B cell (primary cell): ENCODE measurements at regions of chr14 and their contacts with region 1.

Region 1: GRCh38 chr14:72516936-72517700 is 376.8 kb downstream of the DPF3 start:
- DNase-seq: peak; percentile 87
- ATAC-seq: peak; percentile 64
- H3K4me3 ChIP-seq: no peak overlapping the region
- H3K4me3 Mint-ChIP-seq: peak overlapping the region; percentile 56
- H3K27ac ChIP-seq: peak overlapping the region; percentile 74 to 84
- H3K27ac Mint-ChIP-seq: peak overlapping the region; percentile 92
- H3K4me1 ChIP-seq: peaks cover 58 to 65% of the 10 kb centered on the region in 2 donors
- H3K4me1 Mint-ChIP-seq: peaks cover 57% of the 10 kb centered on the region
- H3K27me3 ChIP-seq: peaks cover 0 to under 1% (median 0%) of the 10 kb centered on the region in 4 experiments
- H3K27me3 Mint-ChIP-seq: no peaks in the 10 kb centered on the region
- CTCF ChIP-seq: peak; percentile 92

Region 2: DNA sequence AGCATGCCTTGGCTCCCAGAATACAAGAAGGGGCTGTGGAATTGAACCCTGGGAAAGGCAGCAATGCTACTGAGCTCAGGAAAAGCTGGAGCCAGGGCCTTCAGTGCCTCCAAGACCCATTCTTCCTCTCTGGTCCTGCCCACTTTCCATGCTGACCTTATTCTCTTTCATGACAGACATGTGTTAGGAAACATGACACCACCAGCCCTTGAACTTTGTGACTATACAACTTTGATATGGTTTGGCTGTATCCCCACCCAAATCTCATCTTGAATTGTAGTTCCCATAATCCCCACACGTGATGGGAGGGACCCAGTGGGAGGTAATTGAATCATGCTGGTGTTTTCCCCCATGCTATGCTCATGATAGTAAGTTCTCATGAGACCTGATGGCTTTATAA is 31.4 kb before region 1 on chr14:
- CTCF ChIA-PET with region 1: no interaction called
- POLR2A ChIA-PET with region 1: no interaction called
- intact Hi-C with region 1: no loop called
- DNase-seq: no peak
- ATAC-seq: no peak
- H3K4me3 ChIP-seq: no peak overlapping the region
- H3K4me3 Mint-ChIP-seq: no peak overlapping the region
- H3K27ac ChIP-seq: no peak overlapping the region
- H3K27ac Mint-ChIP-seq: no peak overlapping the region
- H3K4me1 ChIP-seq: peaks cover 8 to 9% of the 10 kb centered on the region in 2 donors
- H3K4me1 Mint-ChIP-seq: peaks cover 12% of the 10 kb centered on the region
- H3K27me3 ChIP-seq: peaks cover 0 to 6% (median 0%) of the 10 kb centered on the region in 4 experiments
- H3K27me3 Mint-ChIP-seq: peaks cover 14% of the 10 kb centered on the region
- CTCF ChIP-seq: no peak

Region 3: GRCh38 chr14:72528059-72528862 is 11.1 kb after region 1 on chr14:
- CTCF ChIA-PET with region 1: interaction called, 22 read pairs
- POLR2A ChIA-PET with region 1: no interaction called
- intact Hi-C with region 1: no loop called
- DNase-seq: no peak
- ATAC-seq: no peak
- H3K4me3 ChIP-seq: no peak overlapping the region
- H3K4me3 Mint-ChIP-seq: no peak overlapping the region
- H3K27ac ChIP-seq: no peak overlapping the region
- H3K27ac Mint-ChIP-seq: peak overlapping the region; percentile 16
- H3K4me1 ChIP-seq: peaks cover 45 to 67% of the 10 kb centered on the region in 2 donors
- H3K4me1 Mint-ChIP-seq: peaks cover 75% of the 10 kb centered on the region
- H3K27me3 ChIP-seq: no peaks in the 10 kb centered on the region
- H3K27me3 Mint-ChIP-seq: no peaks in the 10 kb centered on the region
- CTCF ChIP-seq: no peak

Region 4: DNA sequence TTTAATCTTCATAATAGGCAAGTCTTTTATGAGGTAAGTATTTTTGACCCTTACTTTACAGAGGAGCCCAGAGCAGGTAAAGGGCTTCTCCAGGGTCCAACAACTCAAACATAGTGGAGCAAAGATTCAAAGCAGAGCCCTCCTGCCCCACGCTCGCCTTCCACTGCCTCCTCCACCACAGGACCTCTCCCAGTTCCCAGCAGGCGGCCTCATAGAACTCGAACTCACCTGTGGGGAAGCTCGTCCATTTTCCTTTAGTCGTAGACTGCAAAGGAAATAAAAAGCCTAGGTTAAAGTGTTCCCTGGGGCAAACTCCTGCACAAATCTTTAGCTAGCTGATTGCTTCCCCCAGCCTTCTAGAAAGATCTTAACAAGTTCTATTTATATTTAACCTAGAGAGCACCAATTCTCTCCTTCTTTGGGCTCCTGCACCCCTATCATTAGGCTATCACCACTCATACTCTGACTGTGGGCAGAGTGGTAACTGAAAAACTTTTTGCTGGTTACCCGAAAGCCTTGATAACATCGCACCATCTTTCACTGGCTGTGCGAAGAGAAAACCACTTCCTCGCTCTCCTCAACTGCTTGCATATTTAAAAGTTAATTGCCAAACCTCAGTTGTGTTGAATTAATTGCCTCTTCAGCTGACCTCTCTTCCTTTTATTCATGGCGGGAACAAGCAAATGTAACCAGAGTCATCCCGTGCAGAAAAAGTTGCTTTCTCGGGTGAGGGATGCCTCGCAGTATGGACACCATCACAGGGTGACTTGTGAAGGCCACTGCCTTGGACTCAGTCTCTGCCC is 77.2 kb after region 1 on chr14:
- CTCF ChIA-PET with region 1: interaction called, 6 read pairs
- POLR2A ChIA-PET with region 1: no interaction called
- intact Hi-C with region 1: loop called (anchors 5 kb)
- DNase-seq: no peak
- ATAC-seq: no peak
- H3K4me3 ChIP-seq: no peak overlapping the region
- H3K4me3 Mint-ChIP-seq: peak overlapping the region; percentile 23
- H3K27ac ChIP-seq: no peak overlapping the region
- H3K27ac Mint-ChIP-seq: no peak overlapping the region
- H3K4me1 ChIP-seq: peaks cover 50 to 55% of the 10 kb centered on the region in 2 donors
- H3K4me1 Mint-ChIP-seq: peaks cover 70% of the 10 kb centered on the region
- H3K27me3 ChIP-seq: no peaks in the 10 kb centered on the region
- H3K27me3 Mint-ChIP-seq: no peaks in the 10 kb centered on the region
- CTCF ChIP-seq: no peak

Region 5: GRCh38 chr14:72888192-72888591 is 371.1 kb after region 1 on chr14:
- CTCF ChIA-PET with region 1: interaction called, 27 read pairs
- POLR2A ChIA-PET with region 1: interaction called, 5 read pairs
- intact Hi-C with region 1: no loop called
- DNase-seq: no peak
- ATAC-seq: no peak
- H3K4me3 ChIP-seq: no peak overlapping the region
- H3K4me3 Mint-ChIP-seq: no peak overlapping the region
- H3K27ac ChIP-seq: no peak overlapping the region
- H3K27ac Mint-ChIP-seq: peak overlapping the region; percentile 1
- H3K4me1 ChIP-seq: peaks cover 12 to 25% of the 10 kb centered on the region in 2 donors
- H3K4me1 Mint-ChIP-seq: peaks cover 37% of the 10 kb centered on the region
- H3K27me3 ChIP-seq: peaks cover 0 to 3% (median 0%) of the 10 kb centered on the region in 4 experiments
- H3K27me3 Mint-ChIP-seq: no peaks in the 10 kb centered on the region
- CTCF ChIP-seq: no peak

Region 6: DNA sequence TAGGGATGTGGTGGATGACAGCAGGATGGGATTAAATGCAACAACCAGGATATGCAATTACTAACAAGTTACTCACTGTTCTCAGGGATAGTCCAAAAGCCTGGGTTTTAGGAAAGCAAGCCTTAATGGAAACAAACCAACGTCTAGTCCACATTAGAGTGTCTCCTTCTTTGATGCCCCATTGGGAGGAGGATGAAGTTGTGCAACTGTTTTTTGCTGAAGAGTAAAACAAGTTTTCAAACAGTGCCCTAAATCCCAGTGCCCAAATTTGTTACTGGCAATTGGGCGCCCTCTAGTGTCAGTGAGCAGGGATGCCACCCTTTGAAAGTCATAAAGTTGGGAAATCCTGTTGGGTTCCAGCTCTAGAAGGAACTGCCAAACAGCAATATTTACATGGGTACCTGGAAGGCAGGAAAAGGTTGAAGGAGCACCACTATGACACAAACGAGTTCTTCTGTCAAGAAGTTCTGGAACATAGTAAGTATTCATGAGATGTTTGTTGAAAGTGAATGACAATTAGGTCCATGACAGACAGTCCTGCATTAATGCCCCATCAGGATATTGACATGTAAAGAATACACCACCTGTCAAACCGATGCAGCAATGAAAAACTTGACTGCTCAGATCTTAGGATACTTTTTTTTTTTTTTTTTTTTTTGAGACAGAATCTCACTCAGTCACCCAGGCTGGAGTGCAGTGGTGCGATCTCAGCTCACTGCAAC is 387.9 kb after region 1 on chr14:
- CTCF ChIA-PET with region 1: interaction called, 364 read pairs
- POLR2A ChIA-PET with region 1: interaction called, 3 read pairs
- intact Hi-C with region 1: loop called (anchors 1 kb)
- DNase-seq: peak; percentile 83
- ATAC-seq: peak; percentile 66
- H3K4me3 ChIP-seq: no peak overlapping the region
- H3K4me3 Mint-ChIP-seq: no peak overlapping the region
- H3K27ac ChIP-seq: no peak overlapping the region
- H3K27ac Mint-ChIP-seq: peak overlapping the region; percentile 4
- H3K4me1 ChIP-seq: peaks cover 7 to 22% of the 10 kb centered on the region in 2 donors
- H3K4me1 Mint-ChIP-seq: peaks cover 13% of the 10 kb centered on the region
- H3K27me3 ChIP-seq: no peaks in the 10 kb centered on the region
- H3K27me3 Mint-ChIP-seq: no peaks in the 10 kb centered on the region
- CTCF ChIP-seq: peak; percentile 97

Region 7: GRCh38 chr14:72948481-72949138 is 431.5 kb after region 1 on chr14:
- CTCF ChIA-PET with region 1: interaction called, 165 read pairs
- POLR2A ChIA-PET with region 1: no interaction called
- intact Hi-C with region 1: loop called (anchors 1 kb)
- DNase-seq: peak; percentile 71
- ATAC-seq: peak; percentile 43
- H3K4me3 ChIP-seq: no peak overlapping the region
- H3K4me3 Mint-ChIP-seq: no peak overlapping the region
- H3K27ac ChIP-seq: no peak overlapping the region
- H3K27ac Mint-ChIP-seq: peak overlapping the region; percentile 8
- H3K4me1 ChIP-seq: no peaks in the 10 kb centered on the region
- H3K4me1 Mint-ChIP-seq: no peaks in the 10 kb centered on the region
- H3K27me3 ChIP-seq: no peaks in the 10 kb centered on the region
- H3K27me3 Mint-ChIP-seq: no peaks in the 10 kb centered on the region
- CTCF ChIP-seq: peak; percentile 89